ENCODE measurements at regions of chr1 and their contacts with region 1.

Region 1: GRCh38 chr1:93061895-93062792 is 16.9 kb upstream of the MTF2 start:
- DNase-seq: no peak
- H3K4me3 ChIP-seq: no peak overlapping the region
- H3K27me3 ChIP-seq: peaks cover 6% of the 10 kb centered on the region
- CTCF ChIP-seq: peak; percentile 35; the same call in 1 of the 2 replicates

Region 2: DNA sequence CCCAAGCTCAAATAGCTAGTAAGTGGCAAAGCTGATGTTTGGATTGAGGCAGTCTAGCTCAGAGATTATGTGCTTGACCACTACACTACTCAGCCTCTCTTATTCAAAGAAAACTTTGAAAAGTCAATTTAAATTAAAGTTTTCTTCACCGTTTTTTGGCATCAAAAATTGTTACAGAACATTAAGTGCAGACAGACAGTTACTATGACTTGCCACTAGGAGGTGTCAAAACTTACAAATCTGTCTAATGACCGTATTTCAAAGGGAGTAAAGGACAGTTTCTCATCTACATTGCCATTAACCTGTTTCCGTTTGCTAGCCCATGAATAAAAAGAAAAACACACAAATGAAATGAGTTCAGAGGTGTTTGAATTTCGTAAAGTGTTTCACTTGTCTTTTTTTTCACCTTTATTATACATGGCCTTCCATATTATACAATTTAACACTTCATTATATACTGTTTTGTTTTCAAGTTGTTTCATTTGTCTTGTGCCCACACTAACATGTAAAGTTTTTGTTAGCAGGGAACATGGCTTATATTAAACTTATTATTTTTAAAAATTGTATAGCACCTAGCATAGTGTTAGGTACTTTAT is 40.5 kb before region 1 on chr1:
- CTCF ChIA-PET with region 1: interaction called, 12 read pairs
- POLR2A ChIA-PET with region 1: no interaction called
- DNase-seq: no peak
- H3K4me3 ChIP-seq: no peak overlapping the region
- H3K27me3 ChIP-seq: peaks cover 7% of the 10 kb centered on the region
- CTCF ChIP-seq: peak; percentile 71